Sigmoid colon (tissue), 7 donors: ENCODE measurements at regions of chr10 and their contacts with region 1.

Region 1: GRCh38 chr10:102151774-102152544 is at the start of gene NOLC1:
- DNase-seq: peak; percentile 100
- H3K4me3 ChIP-seq: peak within 1 kb of the TSS; percentile 64 to 81 (median 77)
- H3K27ac ChIP-seq: peak within 1 kb of the TSS; percentile 86 to 92 (median 90)
- H3K4me1 ChIP-seq: peaks cover 0 to 29% (median 23%) of the 10 kb centered on the region in 4 donors
- H3K27me3 ChIP-seq: no peaks in the 10 kb centered on the region
- CTCF ChIP-seq: no peak
- EP300 ChIP-seq: peak in 3 of 4 donors; percentile 61 to 97 (median 83)
- POLR2A ChIP-seq: peak; percentile 63 to 75
- total RNA-seq, gene NOLC1: 30.2 to 50.0 (median 44.8) TPM

Region 2: DNA sequence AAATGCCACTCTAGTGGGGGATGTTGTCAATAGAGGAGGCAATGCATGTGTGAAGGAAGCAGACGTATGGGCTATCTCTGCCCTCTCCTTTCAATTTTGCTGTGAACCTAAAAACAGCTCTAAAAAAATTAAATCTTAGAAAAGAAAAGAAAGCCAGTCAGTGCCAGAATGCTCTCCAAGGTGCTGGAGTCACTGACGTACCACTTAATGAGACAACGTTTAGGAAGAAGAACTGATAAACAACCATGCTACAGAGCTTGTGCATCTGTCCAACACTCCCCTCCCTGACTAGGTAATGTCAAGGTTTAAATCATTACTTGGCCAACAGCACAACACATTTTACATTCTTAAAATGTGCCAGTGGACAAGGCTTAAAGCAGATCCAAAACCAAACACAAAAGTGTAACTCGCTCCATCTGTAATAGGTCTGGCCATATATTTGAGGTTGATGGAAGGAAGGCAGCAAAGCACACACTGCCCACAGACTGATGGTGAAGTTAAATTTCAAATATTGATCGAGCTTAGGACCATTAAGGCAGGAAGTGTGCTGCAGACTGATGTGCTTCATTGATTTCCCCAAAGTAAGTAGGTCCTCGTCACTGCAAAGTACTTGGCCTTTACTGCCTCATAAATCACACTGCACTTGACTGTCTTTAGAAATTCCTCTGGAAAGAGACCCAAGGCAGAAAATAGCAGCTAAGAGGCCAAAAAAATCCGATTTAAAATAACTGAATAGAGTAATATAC is 111.5 kb before region 1 on chr10:
- intact Hi-C with region 1: no loop called
- DNase-seq: no peak
- H3K4me3 ChIP-seq: no peak overlapping the region
- H3K27ac ChIP-seq: no peak overlapping the region
- H3K4me1 ChIP-seq: peaks cover 0 to 12% (median 4%) of the 10 kb centered on the region in 4 donors
- H3K27me3 ChIP-seq: no peaks in the 10 kb centered on the region
- CTCF ChIP-seq: no peak
- EP300 ChIP-seq: no peak
- POLR2A ChIP-seq: no peak

Region 3: GRCh38 chr10:102132563-102133372 is 19.2 kb before region 1 on chr10 and contains the start of gene PPRC1:
- intact Hi-C with region 1: loop called (anchors 1 kb)
- DNase-seq: peak; percentile 99
- H3K4me3 ChIP-seq: peak within 1 kb of the TSS; percentile 80 to 96 (median 86)
- H3K27ac ChIP-seq: peak within 1 kb of the TSS; percentile 93 to 99 (median 96)
- H3K4me1 ChIP-seq: peaks cover 0 to 38% (median 34%) of the 10 kb centered on the region in 4 donors
- H3K27me3 ChIP-seq: no peaks in the 10 kb centered on the region
- CTCF ChIP-seq: peak; percentile 87 to 98 (median 93)
- EP300 ChIP-seq: peak in 2 of 4 donors; percentile 32 to 50
- POLR2A ChIP-seq: peak; percentile 37 to 53
- total RNA-seq, gene PPRC1: 11.0 to 39.9 (median 13.0) TPM

Region 4: DNA sequence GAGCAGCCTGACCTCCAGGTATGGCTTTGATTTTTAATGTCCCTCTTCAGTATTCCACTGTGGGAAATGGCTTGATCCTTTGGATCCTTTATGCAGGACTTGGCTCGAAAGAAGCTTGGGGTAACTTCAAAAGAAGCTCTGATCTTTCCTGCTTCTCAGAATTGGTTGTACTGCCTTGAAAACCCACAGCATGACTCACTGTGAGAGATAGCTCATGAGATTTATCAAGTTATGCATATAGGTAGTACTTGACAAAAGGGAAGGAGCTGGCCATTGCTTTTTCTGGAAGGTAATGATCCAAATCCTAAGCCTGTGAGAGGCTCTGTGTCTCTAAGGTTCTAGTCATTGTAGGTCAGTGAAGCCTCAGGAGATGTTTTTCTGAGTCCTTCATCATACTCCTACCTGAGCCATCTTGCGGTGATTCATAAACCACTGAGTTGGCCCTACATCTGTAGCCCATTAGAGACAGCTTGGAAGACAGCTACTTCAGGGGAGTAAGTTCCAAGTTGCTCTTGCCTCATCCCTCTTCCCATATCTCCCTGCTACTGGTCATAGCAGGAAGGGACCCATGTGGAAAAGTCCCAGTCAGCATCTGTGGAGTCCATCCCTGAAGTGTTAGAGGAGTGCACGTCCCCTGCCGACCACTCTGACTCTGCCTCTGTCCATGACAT is 206.9 kb after region 1 on chr10:
- intact Hi-C with region 1: no loop called
- DNase-seq: no peak
- H3K4me3 ChIP-seq: no peak overlapping the region
- H3K27ac ChIP-seq: no peak overlapping the region
- H3K4me1 ChIP-seq: no peaks in the 10 kb centered on the region
- H3K27me3 ChIP-seq: no peaks in the 10 kb centered on the region
- CTCF ChIP-seq: no peak
- EP300 ChIP-seq: no peak
- POLR2A ChIP-seq: no peak

Region 5: DNA sequence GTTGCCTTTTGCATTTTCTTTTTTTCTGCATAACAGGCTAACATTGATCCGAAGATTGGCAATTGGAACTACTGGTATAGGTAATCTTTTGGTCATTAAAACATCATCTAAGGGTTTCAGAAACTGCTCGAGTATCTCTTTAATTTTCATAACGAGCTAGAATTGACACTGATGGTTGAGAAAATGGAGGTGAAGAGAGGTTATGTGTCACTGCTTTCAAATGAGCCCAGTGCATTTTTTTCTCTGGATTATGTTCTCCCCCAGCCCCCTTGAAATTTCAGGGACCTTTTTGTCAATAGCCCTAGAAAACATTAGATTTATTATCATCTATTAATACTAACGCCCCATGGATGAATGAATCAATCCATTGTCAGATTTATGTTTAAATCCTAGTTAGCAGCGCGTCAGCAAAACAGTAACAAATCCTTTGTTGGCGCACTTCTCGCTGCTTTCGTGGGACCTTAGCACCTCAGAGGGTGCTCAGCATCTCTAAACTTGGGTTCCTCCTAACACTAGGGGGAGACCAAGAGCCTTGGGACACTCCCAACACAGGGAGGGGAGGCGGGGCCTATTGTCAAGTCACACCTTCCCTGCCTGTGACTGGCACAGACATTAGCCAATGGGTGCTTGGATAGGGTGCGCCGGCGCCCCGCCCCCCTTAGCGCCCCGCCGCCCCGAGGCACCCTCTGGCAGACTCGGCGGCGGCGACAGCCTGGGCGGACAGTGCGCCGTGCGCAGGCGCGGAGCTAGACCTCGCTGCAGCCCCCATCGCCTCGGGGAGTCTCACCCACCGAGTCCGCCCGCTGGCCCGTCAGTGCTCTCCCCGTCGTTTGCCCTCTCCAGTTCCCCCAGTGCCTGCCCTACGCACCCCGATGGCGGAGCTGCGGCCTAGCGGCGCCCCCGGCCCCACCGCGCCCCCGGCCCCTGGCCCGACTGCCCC is 351.6 kb after region 1 on chr10 and contains the start of gene SUFU:
- intact Hi-C with region 1: loop called (anchors 5 kb)
- DNase-seq: peak; percentile 99
- H3K4me3 ChIP-seq: peak within 1 kb of the TSS; percentile 81 to 97 (median 94)
- H3K27ac ChIP-seq: peak within 1 kb of the TSS; percentile 91 to 98 (median 94)
- H3K4me1 ChIP-seq: peaks cover 0 to 54% (median 47%) of the 10 kb centered on the region in 4 donors
- H3K27me3 ChIP-seq: no peaks in the 10 kb centered on the region
- CTCF ChIP-seq: peak; percentile 76 to 94 (median 84)
- EP300 ChIP-seq: no peak
- POLR2A ChIP-seq: peak in 1 of 2 donors; percentile 12
- total RNA-seq, gene SUFU: 5.0 to 10.5 (median 6.7) TPM